AG04449 (cell line): ENCODE measurements at regions of chr16 and their contacts with region 1.

Region 1: GRCh38 chr16:30445408-30446202 is at the start of gene SEPHS2:
- DNase-seq: peak; percentile 87
- H3K4me3 ChIP-seq: peak within 1 kb of the TSS; percentile 85
- CTCF ChIP-seq: peak; percentile 71

Region 2: DNA sequence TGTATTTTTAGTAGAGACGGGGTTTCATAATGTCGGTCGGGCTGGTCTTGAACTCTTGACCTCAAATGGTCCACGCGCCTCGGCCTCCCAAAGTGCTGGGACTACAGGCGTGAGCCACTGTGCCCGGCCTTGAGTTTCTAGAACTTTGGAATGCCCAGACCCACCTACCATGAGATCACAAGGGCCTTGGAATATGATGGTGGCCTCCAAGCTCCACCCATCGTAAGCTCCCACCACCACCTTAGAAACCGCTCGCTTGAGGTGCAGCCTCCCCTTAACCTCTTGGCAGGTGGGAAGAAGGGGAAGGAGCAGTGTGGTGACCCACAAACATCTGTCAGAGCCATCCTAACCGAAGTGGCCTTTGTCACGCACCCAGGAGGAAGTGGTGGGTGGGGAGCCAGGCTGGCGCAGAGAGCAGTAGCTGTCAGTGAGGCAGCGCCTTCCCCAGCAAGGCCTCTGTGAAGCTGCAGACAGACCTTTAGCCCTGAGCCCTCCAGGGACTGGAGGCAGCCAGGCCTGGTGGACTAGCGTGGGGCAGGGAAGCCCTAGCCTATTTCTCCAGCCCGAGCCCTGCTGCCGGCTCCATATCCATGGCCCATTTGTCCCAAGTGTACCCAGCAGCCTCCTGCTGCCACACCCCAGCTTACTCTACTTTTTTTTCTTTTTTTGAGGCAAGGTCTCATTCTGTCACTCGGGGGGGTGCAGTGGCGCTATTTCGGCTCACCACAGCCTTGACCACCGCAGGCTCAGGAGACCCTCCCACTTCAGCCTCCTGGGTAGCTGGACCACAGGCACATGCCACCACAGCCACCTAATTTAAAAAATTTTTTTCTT is 13.2 kb after region 1 on chr16:
- CTCF ChIA-PET with region 1: interaction called, 22 read pairs
- POLR2A ChIA-PET with region 1: interaction called, 3 read pairs
- DNase-seq: no peak
- H3K4me3 ChIP-seq: no peak overlapping the region
- CTCF ChIP-seq: no peak

Region 3: DNA sequence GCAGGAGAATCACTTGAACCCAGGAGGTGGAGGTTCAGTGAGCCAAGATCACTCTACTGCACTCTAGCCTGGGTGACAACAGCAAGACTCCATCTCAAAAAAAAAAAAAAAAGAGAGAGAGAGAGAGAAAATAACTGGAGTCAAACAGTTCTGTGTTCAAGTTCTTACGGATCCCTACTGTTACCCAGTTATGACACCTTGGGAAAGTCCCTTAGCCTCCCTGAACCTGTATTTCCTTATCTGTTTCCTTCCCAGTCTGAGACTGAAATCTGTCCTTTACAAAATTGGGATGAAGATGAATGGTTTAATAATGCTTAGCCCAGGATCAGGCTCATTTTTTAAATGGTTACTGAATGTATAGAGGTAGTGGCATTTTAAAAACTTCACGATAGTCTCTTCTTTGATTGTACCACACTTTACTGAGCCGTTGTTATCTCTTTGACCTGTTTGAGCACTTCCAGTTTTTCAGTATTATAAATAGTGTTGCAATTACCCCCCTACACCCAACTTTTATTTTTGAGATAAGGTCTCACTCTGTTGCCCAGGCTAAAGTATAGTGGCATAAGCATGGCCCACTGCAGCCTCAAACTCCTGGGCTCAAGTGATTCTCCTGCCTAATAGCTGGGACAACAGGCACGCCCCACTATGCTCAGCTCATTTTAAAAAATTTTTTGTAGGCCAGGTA is 63.6 kb after region 1 on chr16:
- CTCF ChIA-PET with region 1: interaction called, 12 read pairs
- POLR2A ChIA-PET with region 1: no interaction called
- DNase-seq: no peak
- H3K4me3 ChIP-seq: no peak overlapping the region
- CTCF ChIP-seq: no peak

Region 4: DNA sequence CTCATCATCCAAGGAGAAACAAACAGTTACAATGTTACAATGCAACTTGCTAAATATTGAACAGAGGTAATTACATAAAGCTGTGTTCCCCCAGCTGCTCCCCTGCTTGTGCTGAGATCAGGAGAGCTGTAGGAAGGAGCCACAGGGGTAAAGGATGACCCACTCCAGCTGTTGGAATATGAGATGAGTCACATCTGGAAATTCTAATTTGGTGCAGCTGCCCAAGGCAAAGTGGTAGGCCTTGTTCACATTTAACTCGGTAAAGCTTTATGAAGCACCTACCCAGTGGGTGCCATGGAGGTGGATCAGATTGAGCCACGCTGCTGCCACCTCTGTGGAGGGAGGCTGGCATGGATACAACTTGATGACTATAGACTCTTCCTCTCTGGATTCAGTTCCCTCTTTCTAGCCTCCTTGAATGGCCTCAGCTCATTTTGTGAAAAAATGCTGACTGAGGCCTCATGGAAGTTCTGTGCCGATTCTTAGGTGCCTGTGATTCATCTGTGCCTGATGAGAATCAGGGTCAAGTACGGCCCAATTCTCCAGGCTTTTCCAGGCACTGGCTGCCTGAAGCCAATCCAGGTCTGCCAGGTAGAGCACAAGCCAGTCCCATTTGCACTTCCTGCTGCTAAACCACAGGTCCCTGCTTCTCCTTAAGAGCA is 157.1 kb after region 1 on chr16:
- CTCF ChIA-PET with region 1: interaction called, 27 read pairs
- POLR2A ChIA-PET with region 1: no interaction called
- DNase-seq: no peak
- H3K4me3 ChIP-seq: no peak overlapping the region
- CTCF ChIP-seq: no peak